CD8-positive, alpha-beta T cell (primary cell): ENCODE measurements at regions of chr9 and their contacts with region 1.

Region 1: DNA sequence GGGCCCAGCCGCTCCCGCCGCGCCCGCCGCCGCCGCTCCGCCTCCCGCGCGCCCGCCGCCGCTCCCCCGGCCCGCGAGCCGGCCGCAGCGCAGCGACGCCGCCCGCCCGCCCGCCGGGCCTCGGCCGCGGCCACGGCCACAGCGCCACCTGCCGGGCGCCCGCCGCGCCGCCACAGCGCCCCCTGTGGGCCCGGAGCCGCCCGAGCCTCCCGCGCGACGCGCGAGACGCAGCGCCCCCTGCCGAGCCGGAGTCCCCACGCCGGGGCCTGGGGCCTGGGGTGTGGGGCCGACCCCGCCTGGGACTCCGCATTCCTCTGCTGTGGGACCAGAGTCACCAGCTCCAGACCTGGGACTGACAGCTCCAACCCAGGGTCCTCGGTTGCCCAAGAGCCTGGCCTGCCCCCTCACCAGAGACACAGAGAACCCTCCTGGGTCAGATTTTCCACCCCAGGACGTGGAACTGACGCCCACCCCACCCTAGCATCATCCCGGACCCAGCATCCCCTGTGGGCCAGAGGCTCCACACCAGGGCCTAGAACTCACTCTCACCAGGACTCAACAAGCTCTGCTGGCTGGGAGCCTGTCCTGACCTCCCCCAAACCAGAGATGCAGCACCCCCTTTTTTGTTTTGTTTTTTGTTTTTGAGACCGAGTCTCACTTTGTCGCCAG is at the start of gene RAPGEF1:
- DNase-seq: peak; percentile 70 to 94 (median 82)
- ATAC-seq: peak; percentile 63
- H3K4me3 ChIP-seq: peak within 1 kb of the TSS; percentile 66 to 70
- H3K4me3 Mint-ChIP-seq: peak within 1 kb of the TSS; percentile 90
- H3K27ac ChIP-seq: peak within 1 kb of the TSS; percentile 21 to 38
- H3K27ac Mint-ChIP-seq: peak within 1 kb of the TSS; percentile 87
- H3K4me1 ChIP-seq: peaks cover 61% of the 10 kb centered on the region
- H3K4me1 Mint-ChIP-seq: peaks cover 56% of the 10 kb centered on the region
- H3K27me3 ChIP-seq: no peaks in the 10 kb centered on the region
- H3K27me3 Mint-ChIP-seq: no peaks in the 10 kb centered on the region
- CTCF ChIP-seq: peak; percentile 80
- total RNA-seq, gene RAPGEF1: 127 to 130 TPM

Region 2: GRCh38 chr9:131502781-131503625 is 237.1 kb before region 1 on chr9 and contains the start of gene POMT1:
- CTCF ChIA-PET with region 1: interaction called, 4 read pairs
- POLR2A ChIA-PET with region 1: interaction called, 5 read pairs
- intact Hi-C with region 1: loop called in 1 of 2 experiments (anchors 5 kb)
- DNase-seq: peak; percentile 76 to 95 (median 87)
- ATAC-seq: peak; percentile 56
- H3K4me3 ChIP-seq: peak within 1 kb of the TSS; percentile 79 to 83
- H3K4me3 Mint-ChIP-seq: peak within 1 kb of the TSS; percentile 94
- H3K27ac ChIP-seq: peak within 1 kb of the TSS; percentile 45 to 50
- H3K27ac Mint-ChIP-seq: peak within 1 kb of the TSS; percentile 93
- H3K4me1 ChIP-seq: peaks cover 43% of the 10 kb centered on the region
- H3K4me1 Mint-ChIP-seq: peaks cover 62% of the 10 kb centered on the region
- H3K27me3 ChIP-seq: no peaks in the 10 kb centered on the region
- H3K27me3 Mint-ChIP-seq: no peaks in the 10 kb centered on the region
- CTCF ChIP-seq: no peak
- total RNA-seq, gene POMT1: 33.9 to 40.8 TPM

Region 3: DNA sequence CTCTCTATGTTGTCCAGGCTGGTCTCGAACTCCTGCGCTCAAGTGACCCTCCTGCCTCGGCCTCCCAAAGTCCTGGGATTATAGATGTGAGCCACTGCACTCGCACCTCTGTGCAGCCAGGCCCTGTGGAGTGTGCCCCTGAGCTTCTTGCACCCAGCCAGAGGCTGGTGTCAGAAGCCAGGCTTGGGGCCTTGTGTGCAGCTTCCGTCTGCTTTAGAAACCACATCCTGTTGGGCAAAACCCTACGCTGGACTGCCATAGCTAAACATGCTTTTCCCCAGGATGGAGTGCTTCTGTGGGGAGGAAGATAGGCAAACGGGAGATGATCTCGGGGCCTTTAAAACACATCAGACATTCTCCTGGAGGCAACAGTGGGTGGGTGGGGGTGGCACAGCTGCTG is 154.7 kb before region 1 on chr9:
- CTCF ChIA-PET with region 1: interaction called, 151 read pairs
- POLR2A ChIA-PET with region 1: interaction called, 5 read pairs
- intact Hi-C with region 1: no loop called
- DNase-seq: peak in 8 of 9 experiments; percentile 30 to 86 (median 56)
- ATAC-seq: peak; percentile 86
- H3K4me3 ChIP-seq: no peak overlapping the region
- H3K4me3 Mint-ChIP-seq: peak overlapping the region; percentile 52
- H3K27ac ChIP-seq: peak overlapping the region; percentile 41 to 71
- H3K27ac Mint-ChIP-seq: peak overlapping the region; percentile 88
- H3K4me1 ChIP-seq: peaks cover 38% of the 10 kb centered on the region
- H3K4me1 Mint-ChIP-seq: peaks cover 37% of the 10 kb centered on the region
- H3K27me3 ChIP-seq: no peaks in the 10 kb centered on the region
- H3K27me3 Mint-ChIP-seq: no peaks in the 10 kb centered on the region
- CTCF ChIP-seq: no peak

Region 4: GRCh38 chr9:131609099-131609830 is 130.8 kb before region 1 on chr9:
- CTCF ChIA-PET with region 1: interaction called, 13 read pairs
- POLR2A ChIA-PET with region 1: no interaction called
- intact Hi-C with region 1: no loop called
- DNase-seq: no peak
- ATAC-seq: no peak
- H3K4me3 ChIP-seq: no peak overlapping the region
- H3K4me3 Mint-ChIP-seq: no peak overlapping the region
- H3K27ac ChIP-seq: no peak overlapping the region
- H3K27ac Mint-ChIP-seq: no peak overlapping the region
- H3K4me1 ChIP-seq: no peaks in the 10 kb centered on the region
- H3K4me1 Mint-ChIP-seq: peaks cover 2% of the 10 kb centered on the region
- H3K27me3 ChIP-seq: no peaks in the 10 kb centered on the region
- H3K27me3 Mint-ChIP-seq: no peaks in the 10 kb centered on the region
- CTCF ChIP-seq: no peak

Region 5: DNA sequence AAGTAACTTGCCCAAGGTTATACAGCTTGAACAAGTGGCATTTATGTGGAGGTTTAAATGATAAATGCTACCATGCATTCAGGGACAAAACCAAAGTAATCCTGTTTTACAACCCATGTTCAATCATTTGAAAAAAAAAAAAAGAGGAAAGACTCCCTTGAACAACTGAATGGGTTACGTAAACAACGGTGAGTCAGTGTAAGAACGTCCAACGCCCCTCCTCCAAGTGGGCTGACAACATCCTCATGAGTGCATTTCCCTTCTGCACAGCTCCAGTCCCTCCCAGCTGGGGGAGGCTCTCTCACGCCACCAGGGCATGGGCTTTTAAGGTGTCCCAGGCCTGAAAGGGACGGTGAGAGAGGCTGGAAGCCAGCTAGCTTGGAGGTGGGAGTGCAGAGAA is 104.8 kb before region 1 on chr9:
- CTCF ChIA-PET with region 1: interaction called, 11 read pairs
- POLR2A ChIA-PET with region 1: interaction called, 3 read pairs
- intact Hi-C with region 1: loop called in 1 of 2 experiments (anchors 2 kb)
- DNase-seq: peak; percentile 42 to 92 (median 76)
- ATAC-seq: peak; percentile 99
- H3K4me3 ChIP-seq: no peak overlapping the region
- H3K4me3 Mint-ChIP-seq: no peak overlapping the region
- H3K27ac ChIP-seq: peak overlapping the region in 1 of 2 experiments; percentile 74
- H3K27ac Mint-ChIP-seq: peak overlapping the region; percentile 89
- H3K4me1 ChIP-seq: peaks cover 16% of the 10 kb centered on the region
- H3K4me1 Mint-ChIP-seq: peaks cover 30% of the 10 kb centered on the region
- H3K27me3 ChIP-seq: no peaks in the 10 kb centered on the region
- H3K27me3 Mint-ChIP-seq: no peaks in the 10 kb centered on the region
- CTCF ChIP-seq: no peak

Region 6: DNA sequence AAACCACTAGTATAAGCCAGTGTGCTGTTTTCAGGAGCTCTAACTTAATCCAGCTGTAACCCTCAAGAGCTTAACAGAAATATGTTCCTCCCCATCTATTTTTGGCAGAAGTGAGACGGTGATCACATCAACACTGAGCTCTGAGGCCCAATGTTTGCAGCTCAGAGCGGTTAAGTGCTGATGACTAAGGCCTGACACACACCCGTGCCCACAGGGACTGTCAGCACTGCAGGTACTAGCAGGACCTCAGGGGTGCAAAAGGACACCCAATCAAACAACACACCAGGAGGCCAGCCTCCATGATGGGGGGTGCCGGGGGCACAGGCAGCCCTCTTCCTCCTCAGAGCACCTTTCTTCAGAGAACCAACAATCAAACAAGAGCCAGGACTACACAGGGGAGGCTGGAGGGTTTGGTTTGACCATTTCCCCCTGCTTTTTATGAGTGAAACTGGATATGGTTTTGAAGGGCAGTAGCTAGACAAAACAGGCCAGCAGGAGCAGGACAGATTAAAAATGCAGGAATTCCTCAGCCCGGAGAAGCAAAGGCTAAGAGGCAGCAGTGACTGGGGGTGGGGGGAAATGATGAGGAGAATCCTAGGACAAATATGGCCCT is 61.5 kb before region 1 on chr9:
- CTCF ChIA-PET with region 1: interaction called, 12 read pairs
- POLR2A ChIA-PET with region 1: interaction called, 7 read pairs
- intact Hi-C with region 1: loop called in 1 of 2 experiments (anchors 2 kb)
- DNase-seq: peak; percentile 29 to 88 (median 83)
- ATAC-seq: peak; percentile 90
- H3K4me3 ChIP-seq: no peak overlapping the region
- H3K4me3 Mint-ChIP-seq: peak overlapping the region; percentile 74
- H3K27ac ChIP-seq: peak overlapping the region; percentile 30 to 80
- H3K27ac Mint-ChIP-seq: peak overlapping the region; percentile 93
- H3K4me1 ChIP-seq: peaks cover 52% of the 10 kb centered on the region
- H3K4me1 Mint-ChIP-seq: peaks cover 76% of the 10 kb centered on the region
- H3K27me3 ChIP-seq: no peaks in the 10 kb centered on the region
- H3K27me3 Mint-ChIP-seq: no peaks in the 10 kb centered on the region
- CTCF ChIP-seq: no peak